ENCODE measurements at regions of chr16 and their contacts with region 1.

Region 1: DNA sequence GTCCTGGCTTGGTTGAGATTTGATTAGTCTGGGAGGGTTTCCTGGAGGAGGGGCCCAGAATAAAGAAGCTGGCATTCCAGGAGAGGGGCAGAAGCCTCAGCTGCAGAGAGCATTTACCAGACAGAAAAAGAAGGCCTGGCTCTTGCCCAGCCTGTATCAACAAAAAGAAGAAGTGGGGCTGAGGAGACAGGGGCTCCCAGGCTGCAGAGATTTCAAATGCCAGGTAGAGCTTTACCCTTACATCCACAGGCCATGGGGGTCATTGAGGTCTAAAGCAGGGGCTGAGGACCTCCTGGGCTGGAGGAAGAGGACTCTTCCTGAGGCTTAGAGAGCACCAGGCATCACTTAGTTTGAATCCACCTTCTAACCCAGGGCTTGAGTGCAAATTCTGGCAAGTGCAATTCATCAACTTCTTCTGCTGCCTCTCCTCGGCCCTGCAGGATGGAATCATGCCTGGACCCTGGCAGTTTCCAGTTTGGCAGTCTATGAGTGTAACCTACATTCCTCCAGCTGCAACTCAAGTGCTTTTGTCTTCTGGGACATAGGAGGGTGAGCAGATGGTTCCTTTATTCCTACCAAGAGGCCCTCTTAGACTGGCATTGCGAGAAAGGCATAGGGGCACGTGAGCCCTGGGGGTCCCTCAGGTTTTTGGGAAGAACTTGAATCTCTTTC is 15.3 kb downstream of the CA7 start:
- DNase-seq: peak; percentile 11 to 43
- ATAC-seq: no peak
- H3K4me3 ChIP-seq: no peak overlapping the region
- H3K27ac ChIP-seq: no peak overlapping the region
- H3K4me1 ChIP-seq: no peaks in the 10 kb centered on the region
- H3K27me3 ChIP-seq: no peaks in the 10 kb centered on the region

Region 2: DNA sequence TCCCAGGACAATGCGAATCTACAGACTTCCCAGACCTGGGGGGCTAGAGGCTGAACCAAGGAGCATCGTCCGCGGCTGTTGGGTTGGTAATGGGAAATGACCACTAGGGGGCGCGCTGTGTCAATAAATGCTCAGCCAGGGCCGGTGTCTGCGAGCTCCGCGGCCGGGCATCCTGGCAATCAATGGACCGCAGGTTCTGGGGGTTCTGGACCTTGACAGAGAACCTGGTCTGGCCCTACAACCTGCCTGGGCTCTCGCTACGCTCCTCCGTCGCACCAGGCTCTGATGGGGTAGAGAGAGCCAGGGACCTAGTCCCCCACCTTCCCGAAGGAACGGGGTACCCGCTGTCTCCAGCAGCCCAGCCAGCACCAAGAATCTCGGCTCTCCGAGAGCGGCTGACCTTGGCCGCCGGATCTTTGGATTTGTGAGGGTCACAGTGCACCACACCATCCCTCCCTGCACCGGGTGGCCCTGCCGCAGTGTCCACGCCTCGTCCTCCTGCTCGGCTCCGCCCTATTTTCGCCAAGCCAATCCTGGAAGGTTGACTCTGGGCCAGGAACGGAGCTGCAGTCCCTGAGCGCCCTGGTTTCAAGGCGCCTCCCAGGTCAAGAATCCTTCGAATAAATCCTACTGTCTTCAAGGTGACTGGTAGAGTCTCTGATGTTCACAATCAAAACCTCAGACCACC is 452.9 kb before region 1 on chr16:
- intact Hi-C with region 1: loop called in 1 of 2 experiments (anchors 10 kb)
- DNase-seq: peak; percentile 89 to 96
- ATAC-seq: peak; percentile 94
- H3K4me3 ChIP-seq: peak overlapping the region in 1 of 2 donors; percentile 45
- H3K27ac ChIP-seq: no peak overlapping the region
- H3K4me1 ChIP-seq: no peaks in the 10 kb centered on the region
- H3K27me3 ChIP-seq: no peaks in the 10 kb centered on the region

Region 3: DNA sequence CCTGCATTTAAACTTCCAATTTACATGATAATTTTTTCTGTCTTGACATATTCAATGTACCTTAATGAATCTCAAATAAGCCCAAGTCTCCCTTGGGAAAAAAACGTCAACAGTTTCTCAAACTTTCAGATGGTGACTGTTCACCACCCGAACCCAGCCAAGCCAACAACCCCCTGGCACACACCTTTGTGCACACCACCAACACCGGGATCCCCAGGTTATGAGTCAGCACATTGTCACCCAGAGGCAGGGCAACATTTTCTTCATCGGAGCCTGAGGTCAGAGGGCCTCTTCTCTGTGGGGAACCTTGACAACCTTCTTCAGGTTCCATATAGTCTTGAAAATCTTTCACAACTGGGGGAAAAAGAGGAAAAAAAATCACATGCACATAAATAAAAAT is 123.6 kb before region 1 on chr16:
- intact Hi-C with region 1: loop called in 1 of 2 experiments (anchors 10 kb)
- DNase-seq: no peak
- ATAC-seq: no peak
- H3K4me3 ChIP-seq: no peak overlapping the region
- H3K27ac ChIP-seq: no peak overlapping the region
- H3K4me1 ChIP-seq: no peaks in the 10 kb centered on the region
- H3K27me3 ChIP-seq: no peaks in the 10 kb centered on the region

Region 4: GRCh38 chr16:66774981-66775380 is 84.6 kb before region 1 on chr16:
- intact Hi-C with region 1: no loop called
- DNase-seq: no peak
- ATAC-seq: no peak
- H3K4me3 ChIP-seq: no peak overlapping the region
- H3K27ac ChIP-seq: no peak overlapping the region
- H3K4me1 ChIP-seq: no peaks in the 10 kb centered on the region
- H3K27me3 ChIP-seq: no peaks in the 10 kb centered on the region

Measured in aorta (tissue), 5 donors.